IMR-90 (cell line): ENCODE measurements at regions of chr4 and their contacts with region 1.

Region 1: GRCh38 chr4:38062088-38062893 is 102.1 kb downstream of the PTTG2 start:
- DNase-seq: peak; percentile 79
- ATAC-seq: peak; percentile 87
- H3K4me3 ChIP-seq: no peak overlapping the region
- H3K27ac ChIP-seq: no peak overlapping the region
- H3K4me1 ChIP-seq: peaks cover 2% of the 10 kb centered on the region; the same call in 1 of the 2 replicates
- H3K27me3 ChIP-seq: no peaks in the 10 kb centered on the region
- CTCF ChIP-seq: peak; percentile 87
- POLR2A ChIP-seq: no peak
- RAD21 ChIP-seq: peak; percentile 95

Region 2: GRCh38 chr4:38160487-38161207 is 98.4 kb after region 1 on chr4:
- CTCF ChIA-PET with region 1: no interaction called
- POLR2A ChIA-PET with region 1: no interaction called
- dilution Hi-C with region 1: no loop called
- in situ Hi-C with region 1: no loop called
- intact Hi-C with region 1: loop called (anchors 5 kb)
- DNase-seq: peak; percentile 99
- ATAC-seq: peak; percentile 86
- H3K4me3 ChIP-seq: no peak overlapping the region
- H3K27ac ChIP-seq: peak overlapping the region; percentile 93
- H3K4me1 ChIP-seq: peaks cover 16% of the 10 kb centered on the region
- H3K27me3 ChIP-seq: no peaks in the 10 kb centered on the region
- CTCF ChIP-seq: no peak
- POLR2A ChIP-seq: peak; percentile 64; the same call in 1 of the 2 replicates
- RAD21 ChIP-seq: peak; percentile 16; the same call in 1 of the 2 replicates

Region 3: GRCh38 chr4:38179690-38180377 is 117.5 kb after region 1 on chr4:
- CTCF ChIA-PET with region 1: no interaction called
- POLR2A ChIA-PET with region 1: interaction called, 7 read pairs
- dilution Hi-C with region 1: no loop called
- in situ Hi-C with region 1: no loop called
- intact Hi-C with region 1: loop called (anchors 1 kb)
- DNase-seq: peak; percentile 77
- ATAC-seq: peak; percentile 90
- H3K4me3 ChIP-seq: no peak overlapping the region
- H3K27ac ChIP-seq: no peak overlapping the region
- H3K4me1 ChIP-seq: peaks cover 12% of the 10 kb centered on the region
- H3K27me3 ChIP-seq: no peaks in the 10 kb centered on the region
- CTCF ChIP-seq: peak; percentile 85
- POLR2A ChIP-seq: no peak
- RAD21 ChIP-seq: peak; percentile 92

Region 4: DNA sequence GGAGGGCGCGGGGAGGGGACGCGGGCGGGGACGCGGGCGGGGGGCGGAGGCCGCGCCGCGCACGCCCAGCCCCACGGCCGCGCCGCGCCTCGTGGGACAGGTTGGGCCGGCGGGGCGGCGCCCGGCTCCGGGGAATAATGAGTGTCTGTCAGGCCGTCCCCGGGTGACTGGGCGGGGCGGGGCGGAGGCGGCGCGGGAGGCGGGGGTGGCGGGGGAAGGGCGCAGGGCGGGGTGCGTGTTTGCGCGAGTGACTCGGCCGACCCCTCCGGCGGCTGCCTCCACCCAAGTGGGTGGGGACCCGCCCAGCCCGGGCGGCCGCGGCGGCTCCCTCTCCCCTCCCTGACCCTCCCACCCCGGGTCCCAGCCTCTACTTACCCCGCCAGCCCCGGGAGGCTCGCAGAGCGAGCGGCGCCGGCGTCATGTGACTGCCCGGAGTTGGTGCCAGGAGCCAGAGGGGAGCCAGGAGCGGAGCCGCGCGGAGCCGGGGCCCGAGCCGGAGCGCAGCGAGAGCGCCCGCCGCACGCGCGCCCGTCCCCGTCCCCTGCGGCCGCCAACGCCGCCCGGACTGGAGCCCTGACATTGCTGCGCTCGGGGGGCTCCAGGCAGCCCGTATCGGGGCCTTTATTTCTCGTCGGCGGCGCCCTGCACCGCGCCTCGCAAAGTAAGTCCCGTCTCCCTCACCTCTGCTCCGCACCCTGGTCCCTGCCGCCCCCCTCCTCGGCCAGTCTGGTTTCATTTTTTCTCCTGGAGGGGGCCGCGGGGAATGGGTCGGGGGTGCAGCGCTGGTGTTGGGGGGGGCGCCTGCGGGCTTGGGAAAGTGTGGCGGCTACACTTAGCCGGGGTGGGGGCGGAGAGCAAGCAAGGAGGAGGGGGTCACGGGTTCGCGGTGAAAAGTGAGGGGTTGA is 601.8 kb after region 1 on chr4 and contains the start of gene KLF3:
- CTCF ChIA-PET with region 1: no interaction called
- POLR2A ChIA-PET with region 1: no interaction called
- dilution Hi-C with region 1: no loop called
- in situ Hi-C with region 1: no loop called
- intact Hi-C with region 1: no loop called
- DNase-seq: peak; percentile 82
- ATAC-seq: peak; percentile 80
- H3K4me3 ChIP-seq: peak within 1 kb of the TSS; percentile 77
- H3K27ac ChIP-seq: peak within 1 kb of the TSS; percentile 97
- H3K4me1 ChIP-seq: peaks cover 5% of the 10 kb centered on the region
- H3K27me3 ChIP-seq: no peaks in the 10 kb centered on the region; the same call in 1 of the 2 replicates
- CTCF ChIP-seq: no peak
- POLR2A ChIP-seq: peak; percentile 88
- RAD21 ChIP-seq: no peak
- total RNA-seq, gene KLF3: 8.2 and 9.4 TPM in 2 replicates

Region 5: DNA sequence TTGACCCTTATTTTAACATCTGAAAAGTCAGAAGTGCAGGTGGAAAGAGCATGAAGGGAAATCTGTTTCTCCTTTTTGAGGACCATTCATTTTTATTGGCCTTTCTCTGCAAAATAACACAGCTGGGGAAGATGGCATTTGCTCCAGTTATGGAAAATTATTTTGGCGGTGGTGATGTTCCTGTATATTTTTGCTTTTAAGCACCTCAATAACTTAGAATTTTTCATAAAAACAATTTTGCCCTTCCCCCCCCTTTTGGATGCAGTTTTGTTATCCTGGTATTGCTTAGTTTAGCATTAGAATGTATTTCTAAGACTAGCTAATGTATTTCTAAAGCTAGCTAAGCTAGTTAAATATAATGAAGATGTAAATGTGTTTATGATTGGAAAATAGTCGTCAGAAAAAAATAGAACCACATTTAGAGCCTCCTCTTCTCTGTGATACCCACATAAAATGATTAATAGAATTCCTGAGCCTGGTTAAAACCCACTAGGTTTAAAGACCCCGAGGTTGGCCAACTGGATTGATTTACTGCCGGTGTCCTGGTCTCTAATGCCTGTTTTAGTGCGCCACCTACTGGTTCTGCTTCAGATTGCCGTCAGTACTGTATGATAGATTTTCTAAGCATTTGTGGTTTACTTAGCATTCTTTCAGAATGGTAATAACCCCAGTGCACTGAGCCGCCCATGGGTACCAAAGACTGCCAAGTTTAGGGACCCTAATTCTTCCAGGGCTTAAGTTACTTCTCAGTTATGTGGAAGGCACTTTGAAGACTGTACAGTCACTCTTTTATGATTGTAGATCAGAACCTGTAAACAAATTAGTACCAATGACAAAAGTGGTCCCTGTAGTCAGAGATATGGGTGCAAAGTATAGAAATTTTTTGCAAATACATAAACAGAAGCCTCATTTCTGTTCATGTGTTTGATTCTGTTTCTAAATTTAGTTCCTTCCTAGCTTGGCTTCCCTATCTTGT is 613.1 kb after region 1 on chr4:
- CTCF ChIA-PET with region 1: interaction called, 3 read pairs
- POLR2A ChIA-PET with region 1: no interaction called
- dilution Hi-C with region 1: no loop called
- in situ Hi-C with region 1: no loop called
- intact Hi-C with region 1: loop called (anchors 1 kb)
- DNase-seq: peak; percentile 88
- ATAC-seq: peak; percentile 70
- H3K4me3 ChIP-seq: no peak overlapping the region
- H3K27ac ChIP-seq: no peak overlapping the region
- H3K4me1 ChIP-seq: peaks cover 40% of the 10 kb centered on the region
- H3K27me3 ChIP-seq: no peaks in the 10 kb centered on the region
- CTCF ChIP-seq: peak; percentile 94
- POLR2A ChIP-seq: no peak
- RAD21 ChIP-seq: peak; percentile 98

Region 6: DNA sequence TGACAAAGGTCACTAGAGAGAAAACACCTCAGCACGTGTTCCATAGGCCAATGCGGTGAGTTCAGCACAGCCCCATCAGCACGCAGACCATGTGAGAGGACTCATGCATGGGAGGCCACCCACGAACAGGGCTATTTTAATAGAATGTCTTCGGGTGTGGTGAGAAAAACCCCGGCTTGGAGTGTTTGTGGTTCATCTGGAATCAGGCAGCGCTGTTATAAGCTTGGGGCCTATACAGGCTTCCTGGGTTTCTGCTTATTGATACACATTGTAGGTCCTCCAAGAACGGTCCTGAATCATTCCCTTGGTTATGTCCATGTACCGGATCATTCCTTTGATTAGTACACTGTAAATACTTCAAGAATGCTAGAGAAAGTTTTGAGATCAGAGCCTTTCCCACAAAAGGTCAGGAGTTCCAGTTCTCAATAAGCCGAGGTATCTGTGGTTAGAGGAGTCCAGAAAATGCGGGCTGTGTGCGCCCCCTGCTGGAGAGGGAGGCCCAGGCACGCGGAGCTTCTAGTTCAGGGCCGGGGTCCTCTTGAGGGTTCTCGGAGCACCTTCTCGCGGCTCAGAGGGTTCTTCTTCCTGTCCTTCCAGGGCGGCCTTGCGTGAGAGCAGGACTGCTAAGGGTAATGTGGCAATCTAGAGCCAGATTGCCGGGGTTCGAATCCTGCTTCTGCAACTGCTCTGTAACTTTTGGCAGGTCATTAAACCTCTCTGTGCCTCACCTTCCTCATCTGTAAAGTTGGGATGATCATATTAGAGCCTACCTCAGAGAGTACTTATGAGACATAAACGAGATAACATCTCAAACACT is 668.7 kb after region 1 on chr4:
- CTCF ChIA-PET with region 1: no interaction called
- POLR2A ChIA-PET with region 1: no interaction called
- dilution Hi-C with region 1: no loop called
- in situ Hi-C with region 1: loop called (anchors 5 kb)
- intact Hi-C with region 1: loop called (anchors 1 kb)
- DNase-seq: peak; percentile 94
- ATAC-seq: peak; percentile 97
- H3K4me3 ChIP-seq: no peak overlapping the region
- H3K27ac ChIP-seq: no peak overlapping the region
- H3K4me1 ChIP-seq: peaks cover 3% of the 10 kb centered on the region; the same call in 1 of the 2 replicates
- H3K27me3 ChIP-seq: peaks cover 7% of the 10 kb centered on the region
- CTCF ChIP-seq: peak; percentile 87
- POLR2A ChIP-seq: no peak; the same call in 1 of the 2 replicates
- RAD21 ChIP-seq: peak; percentile 91

Region 7: DNA sequence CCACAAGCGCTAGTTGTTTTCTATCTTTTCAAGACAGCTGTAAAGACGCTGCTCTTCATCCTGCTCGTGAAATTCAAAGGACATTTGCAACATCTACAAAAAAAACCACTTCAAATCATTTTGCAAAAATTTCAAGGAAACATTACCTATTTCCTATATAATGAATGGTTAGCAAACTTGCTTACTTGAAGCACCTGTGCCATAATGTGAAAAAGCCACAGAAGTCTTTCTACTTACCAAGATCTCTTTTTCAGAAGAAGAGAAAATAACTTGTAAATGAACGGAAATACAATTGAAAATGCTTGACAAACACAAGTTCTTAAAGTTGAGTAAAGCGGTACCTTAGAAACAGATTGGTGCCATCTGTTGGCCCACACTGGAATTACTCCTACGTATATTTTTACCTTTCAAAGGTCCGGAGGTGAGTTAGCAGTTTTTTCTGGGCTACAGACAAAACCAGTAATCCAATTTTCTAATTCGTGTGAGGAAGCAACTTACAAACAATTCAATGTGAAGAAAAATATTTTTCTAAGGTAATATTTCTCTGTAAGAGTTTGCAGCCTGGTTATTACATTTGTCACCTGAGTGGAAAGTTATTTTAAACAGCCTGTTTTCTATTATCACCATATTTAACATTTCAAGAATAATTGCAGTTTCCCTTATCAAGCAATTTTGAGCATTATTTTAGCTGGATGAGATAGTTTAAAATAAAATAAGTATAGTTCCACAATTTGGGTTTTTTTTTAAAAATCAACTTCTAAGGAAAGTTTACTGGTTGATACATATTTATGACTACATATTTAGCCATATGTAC is 794.4 kb after region 1 on chr4 and contains the start of gene TLR6:
- CTCF ChIA-PET with region 1: no interaction called
- POLR2A ChIA-PET with region 1: no interaction called
- dilution Hi-C with region 1: no loop called
- in situ Hi-C with region 1: no loop called
- intact Hi-C with region 1: loop called (anchors 5 kb)
- DNase-seq: peak; percentile 68
- ATAC-seq: 0 out of 2 replicates have a peak, but pooled peaks have one; percentile 35
- H3K4me3 ChIP-seq: peak within 1 kb of the TSS; percentile 31; the same call in 1 of the 2 replicates
- H3K27ac ChIP-seq: peak within 1 kb of the TSS; percentile 92
- H3K4me1 ChIP-seq: peaks cover 6% of the 10 kb centered on the region
- H3K27me3 ChIP-seq: no peaks in the 10 kb centered on the region
- CTCF ChIP-seq: peak; percentile 68
- POLR2A ChIP-seq: no peak
- RAD21 ChIP-seq: peak; percentile 56
- total RNA-seq, gene TLR6: 3.9 and 4.4 TPM in 2 replicates

Region 8: DNA sequence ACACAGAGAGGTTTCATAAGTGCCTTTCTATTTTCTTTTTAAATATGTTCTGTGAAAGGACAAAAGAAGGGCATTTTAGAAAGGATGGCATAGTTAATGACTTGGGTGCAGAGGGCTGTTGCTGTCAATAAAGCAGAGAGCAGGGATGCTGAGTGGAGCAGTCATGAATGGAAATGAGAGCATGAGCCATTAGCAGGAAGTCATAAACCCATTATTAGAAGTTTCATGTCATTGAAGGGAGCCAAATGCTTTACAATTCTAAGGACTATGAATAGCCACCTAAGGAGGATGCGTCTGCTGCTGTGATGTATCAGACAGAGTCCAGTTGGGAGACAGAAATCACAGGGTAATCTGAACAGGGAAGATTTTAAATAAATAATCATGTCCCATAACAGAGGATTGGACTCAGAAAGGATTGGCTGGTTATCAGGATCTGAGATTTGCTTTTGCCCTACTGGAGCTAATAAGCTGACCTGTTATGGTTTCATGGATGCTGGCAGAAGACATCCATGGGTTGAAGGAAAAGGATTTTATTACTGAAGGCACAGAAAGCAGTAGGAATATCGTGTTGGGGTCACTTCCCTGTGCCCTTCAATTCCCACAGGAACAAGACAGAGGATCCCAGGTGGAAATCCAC is 1072.5 kb after region 1 on chr4:
- CTCF ChIA-PET with region 1: interaction called, 3 read pairs
- POLR2A ChIA-PET with region 1: no interaction called
- dilution Hi-C with region 1: no loop called
- in situ Hi-C with region 1: no loop called
- intact Hi-C with region 1: loop called (anchors 10 kb)
- DNase-seq: peak; percentile 1
- ATAC-seq: peak; percentile 24
- H3K4me3 ChIP-seq: no peak overlapping the region
- H3K27ac ChIP-seq: no peak overlapping the region; the same call in 1 of the 2 replicates
- H3K4me1 ChIP-seq: peaks cover 4% of the 10 kb centered on the region; the same call in 1 of the 2 replicates
- H3K27me3 ChIP-seq: no peaks in the 10 kb centered on the region
- CTCF ChIP-seq: no peak
- POLR2A ChIP-seq: no peak
- RAD21 ChIP-seq: no peak